CD8-positive, alpha-beta T cell (primary cell): ENCODE measurements at regions of chr3 and their contacts with region 1.

Region 1: GRCh38 chr3:17023006-17023664 is 138.4 kb downstream of the PLCL2 start:
- DNase-seq: peak in 8 of 9 experiments; percentile 29 to 88 (median 60)
- ATAC-seq: peak; percentile 95
- H3K4me3 ChIP-seq: no peak overlapping the region
- H3K4me3 Mint-ChIP-seq: peak overlapping the region; percentile 55
- H3K27ac ChIP-seq: peak overlapping the region in 1 of 2 experiments; percentile 51
- H3K27ac Mint-ChIP-seq: peak overlapping the region; percentile 90
- H3K4me1 ChIP-seq: peaks cover 30% of the 10 kb centered on the region
- H3K4me1 Mint-ChIP-seq: peaks cover 70% of the 10 kb centered on the region
- H3K27me3 ChIP-seq: no peaks in the 10 kb centered on the region
- H3K27me3 Mint-ChIP-seq: no peaks in the 10 kb centered on the region
- CTCF ChIP-seq: no peak

Region 2: DNA sequence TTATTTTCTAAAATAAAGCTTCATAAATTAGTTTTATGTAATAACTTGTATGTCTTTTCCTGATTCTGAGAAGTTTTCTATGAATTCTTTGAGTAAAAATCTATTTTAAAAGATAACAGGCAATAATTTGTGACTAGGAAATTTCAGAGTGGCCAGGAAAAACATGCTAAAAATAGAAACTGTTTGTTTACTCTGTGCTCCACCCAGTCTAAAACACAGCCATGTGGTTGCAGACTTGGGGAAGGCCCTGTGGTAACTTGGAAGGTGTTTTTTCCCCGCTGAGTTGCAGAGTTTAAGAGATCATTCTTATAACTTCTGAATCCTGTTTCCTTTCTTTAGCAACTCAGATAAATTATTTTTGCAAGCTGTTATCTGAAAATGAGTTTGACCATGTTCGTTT is 116.5 kb before region 1 on chr3:
- CTCF ChIA-PET with region 1: no interaction called
- POLR2A ChIA-PET with region 1: no interaction called
- intact Hi-C with region 1: no loop called
- DNase-seq: peak in 3 of 9 experiments; percentile 46 to 79 (median 61)
- ATAC-seq: peak; percentile 53
- H3K4me3 ChIP-seq: no peak overlapping the region
- H3K4me3 Mint-ChIP-seq: peak overlapping the region; percentile 29
- H3K27ac ChIP-seq: peak overlapping the region in 1 of 2 experiments; percentile 46
- H3K27ac Mint-ChIP-seq: peak overlapping the region; percentile 35
- H3K4me1 ChIP-seq: peaks cover 72% of the 10 kb centered on the region
- H3K4me1 Mint-ChIP-seq: peaks cover 84% of the 10 kb centered on the region
- H3K27me3 ChIP-seq: no peaks in the 10 kb centered on the region
- H3K27me3 Mint-ChIP-seq: no peaks in the 10 kb centered on the region
- CTCF ChIP-seq: no peak

Region 3: DNA sequence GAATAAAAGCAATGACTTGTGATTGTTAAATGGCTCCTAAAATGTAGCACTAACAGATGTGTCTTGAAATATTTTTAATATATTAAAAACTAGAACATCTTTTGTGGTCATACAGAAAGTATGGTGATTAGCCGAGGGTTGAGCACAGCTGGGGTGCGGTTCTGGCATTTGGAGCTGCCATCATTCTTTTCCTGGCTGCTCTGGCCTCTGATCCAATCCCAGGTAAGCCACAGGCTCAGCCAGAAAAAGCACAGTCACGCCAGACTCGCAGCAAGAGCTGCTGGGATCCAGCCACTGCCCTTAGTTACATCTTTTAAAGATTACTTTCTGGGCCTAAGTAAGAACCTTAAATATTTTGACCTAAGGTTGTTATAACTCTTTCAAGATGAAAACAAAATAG is 58.4 kb after region 1 on chr3:
- CTCF ChIA-PET with region 1: no interaction called
- POLR2A ChIA-PET with region 1: no interaction called
- intact Hi-C with region 1: loop called in 1 of 2 experiments (anchors 5 kb)
- DNase-seq: no peak
- ATAC-seq: no peak
- H3K4me3 ChIP-seq: no peak overlapping the region
- H3K4me3 Mint-ChIP-seq: no peak overlapping the region
- H3K27ac ChIP-seq: no peak overlapping the region
- H3K27ac Mint-ChIP-seq: no peak overlapping the region
- H3K4me1 ChIP-seq: peaks cover 1% of the 10 kb centered on the region
- H3K4me1 Mint-ChIP-seq: peaks cover 46% of the 10 kb centered on the region
- H3K27me3 ChIP-seq: no peaks in the 10 kb centered on the region
- H3K27me3 Mint-ChIP-seq: no peaks in the 10 kb centered on the region
- CTCF ChIP-seq: no peak

Region 4: DNA sequence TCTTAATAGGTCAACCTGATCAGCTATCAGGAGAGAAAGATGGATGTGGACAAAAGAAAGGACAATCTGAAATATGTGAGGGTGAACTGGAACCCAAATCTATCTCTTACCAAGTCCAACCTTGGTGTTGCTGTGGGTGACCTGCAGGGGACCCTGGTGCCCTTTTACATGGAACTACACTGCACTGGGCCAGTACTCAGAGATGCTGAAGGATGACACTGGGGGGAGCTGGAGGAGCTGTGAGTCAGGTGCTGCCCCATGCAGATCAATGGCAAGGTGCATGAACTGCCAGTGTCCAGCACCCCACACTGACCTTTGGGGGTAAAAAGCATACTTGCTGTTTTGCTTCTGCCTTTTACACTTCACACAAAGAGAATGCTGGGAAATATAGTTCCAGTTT is 774.9 kb after region 1 on chr3:
- CTCF ChIA-PET with region 1: no interaction called
- POLR2A ChIA-PET with region 1: no interaction called
- intact Hi-C with region 1: no loop called
- DNase-seq: no peak
- ATAC-seq: no peak
- H3K4me3 ChIP-seq: no peak overlapping the region
- H3K4me3 Mint-ChIP-seq: no peak overlapping the region
- H3K27ac ChIP-seq: no peak overlapping the region
- H3K27ac Mint-ChIP-seq: no peak overlapping the region
- H3K4me1 ChIP-seq: no peaks in the 10 kb centered on the region
- H3K4me1 Mint-ChIP-seq: no peaks in the 10 kb centered on the region
- H3K27me3 ChIP-seq: no peaks in the 10 kb centered on the region
- H3K27me3 Mint-ChIP-seq: peaks cover 11% of the 10 kb centered on the region
- CTCF ChIP-seq: no peak